GM12878 (cell line): ENCODE measurements at regions of chr2 and their contacts with region 1.

Region 1: GRCh38 chr2:157302492-157303099 is 23.0 kb downstream of the ERMN start:
- DNase-seq: peak; percentile 21
- ATAC-seq: peak; percentile 82
- H3K4me3 ChIP-seq: no peak overlapping the region
- H3K27ac ChIP-seq: no peak overlapping the region
- H3K4me1 ChIP-seq: no peaks in the 10 kb centered on the region
- H3K27me3 ChIP-seq: peaks cover 0 to 2% of the 10 kb centered on the region in 2 experiments; a peak in 2 of 4 replicates
- CTCF ChIP-seq: peak; percentile 55 to 71 (median 62)
- EP300 ChIP-seq: no peak
- POLR2A ChIP-seq: no peak
- RAD21 ChIP-seq: peak; percentile 93

Region 2: GRCh38 chr2:157173740-157174184 is 128.8 kb before region 1 on chr2:
- CTCF ChIA-PET with region 1: no interaction called
- POLR2A ChIA-PET with region 1: no interaction called
- RAD21 ChIA-PET with region 1: no interaction called
- SMC1A ChIA-PET with region 1: no interaction called
- in situ Hi-C with region 1: no loop called
- intact Hi-C with region 1: no loop called
- DNase-seq: no peak
- ATAC-seq: no peak
- H3K4me3 ChIP-seq: no peak overlapping the region
- H3K27ac ChIP-seq: no peak overlapping the region
- H3K4me1 ChIP-seq: no peaks in the 10 kb centered on the region
- H3K27me3 ChIP-seq: no peaks in the 10 kb centered on the region; a peak in 1 of 4 replicates
- CTCF ChIP-seq: no peak
- EP300 ChIP-seq: no peak
- POLR2A ChIP-seq: no peak
- RAD21 ChIP-seq: no peak

Region 3: DNA sequence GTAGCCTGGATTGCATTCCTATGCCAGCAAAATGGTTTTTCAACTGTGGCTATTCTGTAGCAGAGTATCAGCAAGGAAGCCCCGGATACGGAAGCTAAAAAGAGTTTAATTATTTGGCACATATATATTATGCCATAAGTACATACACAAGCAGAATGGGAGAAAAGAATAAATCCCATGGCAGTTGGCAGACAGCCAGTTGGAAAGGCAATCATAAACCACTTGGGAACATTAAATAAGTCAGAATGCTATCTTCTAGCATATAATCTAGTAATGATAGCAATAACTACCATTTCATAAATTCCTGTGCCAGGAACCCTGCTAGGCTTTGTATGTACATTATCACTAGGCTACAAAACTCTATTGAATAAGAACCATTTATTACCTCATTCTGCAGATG is 19.1 kb before region 1 on chr2:
- CTCF ChIA-PET with region 1: interaction called, 14 read pairs
- POLR2A ChIA-PET with region 1: no interaction called
- RAD21 ChIA-PET with region 1: interaction called, 9 read pairs
- SMC1A ChIA-PET with region 1: interaction called, 41 read pairs
- in situ Hi-C with region 1: no loop called
- intact Hi-C with region 1: no loop called
- DNase-seq: no peak
- ATAC-seq: no peak
- H3K4me3 ChIP-seq: no peak overlapping the region
- H3K27ac ChIP-seq: no peak overlapping the region
- H3K4me1 ChIP-seq: no peaks in the 10 kb centered on the region
- H3K27me3 ChIP-seq: 0 out of 4 replicates have a peak, but pooled peaks cover 0 to 1% of the 10 kb centered on the region in 2 experiments
- CTCF ChIP-seq: no peak
- EP300 ChIP-seq: no peak
- POLR2A ChIP-seq: no peak
- RAD21 ChIP-seq: no peak

Region 4: DNA sequence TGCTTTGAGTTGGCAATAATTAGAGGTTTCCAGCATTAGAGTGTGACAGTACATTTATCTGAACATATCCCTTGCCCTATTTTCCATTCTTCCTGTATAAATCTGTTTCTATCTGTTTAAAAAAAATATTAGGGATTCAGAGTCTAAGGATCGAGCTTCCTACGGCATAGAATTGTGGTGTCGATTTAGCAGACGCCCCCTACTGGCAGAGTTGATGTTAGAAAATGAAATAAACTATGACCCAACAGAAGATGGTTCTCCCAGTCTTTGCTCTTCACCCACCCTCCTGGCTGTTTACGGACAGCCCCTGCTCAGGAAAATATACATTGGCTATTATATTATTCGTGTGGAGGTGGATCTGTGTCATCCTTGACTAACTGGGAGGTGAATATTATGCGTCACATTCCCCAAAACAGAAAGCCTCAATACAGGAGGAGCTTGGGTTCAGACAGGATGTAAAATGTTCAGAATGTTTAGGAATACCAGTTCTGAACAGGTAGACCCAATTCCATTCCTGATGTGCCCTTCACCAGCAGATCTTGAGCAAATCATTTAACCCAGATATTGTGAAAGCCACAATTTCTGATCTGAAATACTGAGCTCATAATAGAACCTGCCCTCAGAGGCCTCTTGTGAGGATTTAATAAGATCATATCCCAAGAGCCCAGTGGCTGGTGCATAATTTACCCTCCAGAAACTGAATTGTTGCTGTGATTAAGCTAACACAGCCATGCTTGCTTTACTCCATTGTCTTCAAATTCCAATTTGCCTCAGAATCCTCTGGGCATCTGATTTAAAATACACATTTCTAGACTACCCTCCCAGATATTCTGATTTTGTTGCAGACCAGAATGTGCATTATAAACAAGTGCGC is 33.8 kb after region 1 on chr2:
- CTCF ChIA-PET with region 1: interaction called, 167 read pairs
- POLR2A ChIA-PET with region 1: interaction called, 6 read pairs
- RAD21 ChIA-PET with region 1: interaction called, 126 read pairs
- SMC1A ChIA-PET with region 1: interaction called, 138 read pairs
- in situ Hi-C with region 1: no loop called
- intact Hi-C with region 1: no loop called
- DNase-seq: no peak
- ATAC-seq: peak; percentile 74; the same call in 2 of the 3 replicates
- H3K4me3 ChIP-seq: no peak overlapping the region
- H3K27ac ChIP-seq: no peak overlapping the region
- H3K4me1 ChIP-seq: no peaks in the 10 kb centered on the region
- H3K27me3 ChIP-seq: no peaks in the 10 kb centered on the region
- CTCF ChIP-seq: peak; percentile 39 to 69 (median 56)
- EP300 ChIP-seq: no peak
- POLR2A ChIP-seq: no peak
- RAD21 ChIP-seq: peak; percentile 39; the same call in 1 of the 2 replicates

Region 5: DNA sequence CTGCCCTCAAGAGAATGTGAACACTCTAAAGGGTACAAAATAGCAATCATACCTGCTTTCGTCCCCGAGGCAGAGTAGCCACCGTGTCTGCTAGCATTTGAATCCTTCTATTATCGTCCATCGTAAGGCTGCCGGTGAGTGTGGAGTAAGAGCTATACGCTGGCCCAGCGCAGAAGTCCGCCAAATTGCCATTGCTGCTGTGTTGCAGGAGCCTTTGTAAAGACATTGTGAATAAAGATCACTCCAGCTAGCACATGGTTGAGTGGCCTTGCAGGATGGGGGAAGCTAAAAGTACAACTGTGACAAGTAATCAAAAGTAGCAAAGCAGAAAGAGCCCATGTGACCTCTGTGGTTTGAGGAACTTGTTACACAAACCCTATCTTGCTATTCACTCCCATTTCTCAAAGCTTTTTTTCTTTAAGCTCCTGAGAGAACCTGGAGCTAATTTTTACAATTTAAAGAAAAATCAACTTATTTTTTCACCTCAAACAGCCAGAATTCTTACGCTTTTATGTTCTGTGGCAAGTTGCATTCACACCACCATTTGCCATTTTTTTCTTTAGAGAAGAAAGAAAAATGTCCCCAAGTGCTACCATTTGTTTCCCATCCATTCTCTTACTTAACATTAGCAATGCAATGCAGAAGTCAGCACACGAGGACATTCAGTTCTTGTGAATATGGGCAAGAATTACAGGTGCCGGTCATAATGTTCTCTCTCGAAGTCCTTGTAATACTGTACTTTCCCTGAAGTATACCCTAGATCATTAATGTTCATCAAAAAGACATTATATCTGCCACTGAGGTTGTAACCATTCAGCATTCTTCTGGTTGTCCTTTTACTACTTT is 141.4 kb after region 1 on chr2 and contains the start of gene CYTIP:
- CTCF ChIA-PET with region 1: interaction called, 12 read pairs
- POLR2A ChIA-PET with region 1: no interaction called
- RAD21 ChIA-PET with region 1: interaction called, 21 read pairs
- SMC1A ChIA-PET with region 1: interaction called, 11 read pairs
- in situ Hi-C with region 1: no loop called
- intact Hi-C with region 1: no loop called
- DNase-seq: peak; percentile 91
- ATAC-seq: peak; percentile 57
- H3K4me3 ChIP-seq: peak within 1 kb of the TSS; percentile 90
- H3K27ac ChIP-seq: peak within 1 kb of the TSS; percentile 98
- H3K4me1 ChIP-seq: peaks cover 8% of the 10 kb centered on the region; the same call in 1 of the 2 replicates
- H3K27me3 ChIP-seq: no peaks in the 10 kb centered on the region
- CTCF ChIP-seq: no peak
- EP300 ChIP-seq: peak; percentile 52 to 67; a peak in 3 of 4 replicates
- POLR2A ChIP-seq: peak; percentile 89
- RAD21 ChIP-seq: 0 out of 2 replicates have a peak, but pooled peaks have one; percentile 21
- polyA plus RNA-seq, gene CYTIP: 71.6 to 75.4 TPM

Region 6: DNA sequence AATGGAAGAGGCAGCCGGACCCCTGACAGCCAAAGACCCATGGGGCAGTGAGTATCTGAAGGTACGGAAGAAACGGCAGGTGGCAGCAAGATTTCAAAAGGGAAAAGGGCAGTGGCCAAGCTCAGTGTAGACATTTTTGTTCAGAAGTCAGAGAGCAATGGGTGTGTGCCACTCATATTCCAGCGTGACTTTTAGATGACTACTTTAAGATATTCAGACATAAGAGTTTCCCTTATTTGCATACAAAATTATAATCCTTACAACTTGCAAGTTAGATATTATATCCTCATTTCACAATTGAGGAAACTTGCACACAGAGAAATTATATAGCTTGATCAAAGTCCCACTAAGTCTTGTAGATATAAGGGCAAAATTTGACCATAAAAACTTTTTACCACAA is 202.0 kb after region 1 on chr2:
- CTCF ChIA-PET with region 1: interaction called, 14 read pairs
- POLR2A ChIA-PET with region 1: no interaction called
- RAD21 ChIA-PET with region 1: interaction called, 14 read pairs
- SMC1A ChIA-PET with region 1: interaction called, 14 read pairs
- in situ Hi-C with region 1: no loop called
- intact Hi-C with region 1: no loop called
- DNase-seq: no peak
- ATAC-seq: no peak
- H3K4me3 ChIP-seq: no peak overlapping the region
- H3K27ac ChIP-seq: no peak overlapping the region
- H3K4me1 ChIP-seq: no peaks in the 10 kb centered on the region
- H3K27me3 ChIP-seq: peaks cover 0 to 3% of the 10 kb centered on the region in 2 experiments; a peak in 1 of 4 replicates
- CTCF ChIP-seq: no peak
- EP300 ChIP-seq: no peak
- POLR2A ChIP-seq: no peak
- RAD21 ChIP-seq: no peak

Region 7: DNA sequence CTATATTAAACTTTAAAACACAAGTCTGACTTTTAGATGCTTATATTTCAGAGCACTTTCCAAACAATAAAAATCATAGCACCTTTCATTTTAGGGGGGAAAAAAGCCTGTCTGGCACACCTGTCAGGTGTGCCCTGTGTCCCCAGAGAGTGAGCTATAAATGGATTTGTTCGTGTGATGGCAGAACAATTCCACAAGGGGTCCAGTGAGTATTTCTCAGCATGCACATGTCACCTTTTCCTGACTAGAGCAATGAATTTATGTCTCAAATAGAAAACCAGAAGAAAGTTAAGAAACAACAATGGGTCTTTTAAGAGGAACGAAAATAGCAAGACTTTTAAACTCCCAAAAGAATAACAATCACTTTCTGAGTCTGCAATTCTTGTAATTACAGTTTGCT is 270.1 kb after region 1 on chr2:
- CTCF ChIA-PET with region 1: no interaction called
- POLR2A ChIA-PET with region 1: no interaction called
- RAD21 ChIA-PET with region 1: no interaction called
- SMC1A ChIA-PET with region 1: no interaction called
- in situ Hi-C with region 1: no loop called
- intact Hi-C with region 1: no loop called
- DNase-seq: no peak
- ATAC-seq: peak; percentile 65; the same call in 2 of the 3 replicates
- H3K4me3 ChIP-seq: no peak overlapping the region
- H3K27ac ChIP-seq: no peak overlapping the region
- H3K4me1 ChIP-seq: no peaks in the 10 kb centered on the region
- H3K27me3 ChIP-seq: no peaks in the 10 kb centered on the region
- CTCF ChIP-seq: peak; percentile 14 to 39 (median 32); a peak in 1 of 6 replicates
- EP300 ChIP-seq: no peak
- POLR2A ChIP-seq: no peak
- RAD21 ChIP-seq: no peak

Region 8: DNA sequence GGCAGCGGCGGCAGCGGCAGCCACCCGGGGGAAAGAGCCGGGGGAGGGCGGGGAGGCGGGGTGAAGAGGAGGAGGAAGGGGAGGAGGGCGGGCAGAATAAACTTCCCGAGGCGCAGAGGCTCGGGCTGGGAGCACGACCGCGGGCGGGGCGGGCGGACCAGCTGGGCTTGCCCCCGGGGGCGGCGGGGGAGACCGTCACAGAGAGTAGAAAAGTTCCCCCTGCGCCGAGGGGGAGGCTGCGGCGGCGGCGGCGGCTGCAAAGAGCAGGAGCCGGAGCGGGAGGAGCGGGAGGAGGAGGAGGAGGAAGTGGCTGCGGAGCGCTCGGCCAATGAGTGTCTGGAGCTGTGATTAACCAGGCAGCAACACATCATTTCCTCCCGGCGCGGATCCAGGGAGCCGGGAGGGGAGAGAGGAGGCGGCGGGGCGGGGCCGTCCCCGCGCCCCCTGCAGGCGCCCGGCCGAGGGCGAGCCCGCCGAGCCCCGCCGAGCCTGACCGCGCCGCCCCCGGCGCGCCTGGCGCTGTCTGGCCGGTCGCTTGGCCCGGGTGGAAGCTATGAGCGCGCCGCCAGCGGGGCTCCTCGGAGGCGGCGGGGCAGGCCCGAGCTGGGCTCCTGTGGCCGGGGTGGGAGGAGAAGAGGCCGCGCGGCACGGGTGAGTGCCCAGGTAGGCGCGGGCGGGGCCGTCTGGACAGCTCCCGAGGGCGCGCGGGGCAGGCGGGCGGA is 573.6 kb after region 1 on chr2 and contains the start of gene ACVR1:
- CTCF ChIA-PET with region 1: no interaction called
- POLR2A ChIA-PET with region 1: no interaction called
- RAD21 ChIA-PET with region 1: no interaction called
- SMC1A ChIA-PET with region 1: no interaction called
- in situ Hi-C with region 1: no loop called
- intact Hi-C with region 1: loop called (anchors 10 kb)
- DNase-seq: no peak
- ATAC-seq: peak; percentile 91
- H3K4me3 ChIP-seq: peak within 1 kb of the TSS; percentile 76; the same call in 1 of the 2 replicates
- H3K27ac ChIP-seq: no peak within 1 kb of the TSS
- H3K4me1 ChIP-seq: no peaks in the 10 kb centered on the region
- H3K27me3 ChIP-seq: peaks cover 2 to 12% of the 10 kb centered on the region in 2 experiments; a peak in 3 of 4 replicates
- CTCF ChIP-seq: peak; percentile 5 to 34 (median 14); a peak in 1 of 6 replicates
- EP300 ChIP-seq: no peak
- POLR2A ChIP-seq: no peak
- RAD21 ChIP-seq: no peak
- polyA plus RNA-seq, gene ACVR1: not detected